Activated CD4-positive, alpha-beta memory T cell treated with anti-CD3 and anti-CD28 coated beads for 36 hours (primary cell): ENCODE measurements at regions of chr1 and their contacts with region 1.

Region 1: GRCh38 chr1:200488375-200489165 is 78.7 kb upstream of the ZNF281 start:
- DNase-seq: peak; percentile 50
- H3K4me3 Mint-ChIP-seq: no peak overlapping the region
- H3K27ac Mint-ChIP-seq: no peak overlapping the region
- H3K4me1 Mint-ChIP-seq: peaks cover 14% of the 10 kb centered on the region
- H3K27me3 Mint-ChIP-seq: peaks cover 18% of the 10 kb centered on the region

Region 2: DNA sequence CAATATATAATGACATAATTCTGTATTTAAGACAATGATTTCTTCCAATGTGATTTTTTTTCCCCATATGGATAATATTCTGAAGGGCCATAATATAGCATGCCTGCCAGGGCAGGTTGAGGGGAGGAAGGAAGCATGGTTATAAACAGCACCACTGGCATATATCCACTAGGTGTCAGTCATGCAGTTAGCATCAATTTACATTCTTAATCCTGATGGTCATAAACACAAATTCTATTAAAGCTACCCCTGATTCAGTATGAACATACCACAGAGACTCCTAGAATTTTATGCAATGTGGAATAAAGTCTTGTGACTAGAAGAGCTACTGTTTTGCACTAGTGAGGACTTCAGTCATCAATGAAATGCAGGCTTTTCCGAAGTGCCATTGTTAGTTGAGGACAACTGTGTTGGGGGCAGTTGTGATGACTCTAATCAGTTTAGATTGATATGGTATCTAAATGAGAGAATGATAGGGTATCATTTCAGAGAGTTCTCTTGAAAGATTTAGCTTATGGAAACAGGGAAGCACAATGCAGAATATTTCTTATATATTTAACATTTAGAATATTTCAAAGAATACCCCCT is 803.8 kb before region 1 on chr1:
- CTCF ChIA-PET with region 1: interaction called, 19 read pairs
- POLR2A ChIA-PET with region 1: no interaction called
- intact Hi-C with region 1: loop called (anchors 1 kb)
- DNase-seq: peak; percentile 13
- H3K4me3 Mint-ChIP-seq: no peak overlapping the region
- H3K27ac Mint-ChIP-seq: no peak overlapping the region
- H3K4me1 Mint-ChIP-seq: no peaks in the 10 kb centered on the region
- H3K27me3 Mint-ChIP-seq: peaks cover 1% of the 10 kb centered on the region

Region 3: GRCh38 chr1:200139661-200140250 is 348.8 kb before region 1 on chr1:
- CTCF ChIA-PET with region 1: interaction called, 16 read pairs
- POLR2A ChIA-PET with region 1: no interaction called
- intact Hi-C with region 1: loop called (anchors 1 kb)
- DNase-seq: peak; percentile 27
- H3K4me3 Mint-ChIP-seq: no peak overlapping the region
- H3K27ac Mint-ChIP-seq: no peak overlapping the region
- H3K4me1 Mint-ChIP-seq: no peaks in the 10 kb centered on the region
- H3K27me3 Mint-ChIP-seq: no peaks in the 10 kb centered on the region

Region 4: DNA sequence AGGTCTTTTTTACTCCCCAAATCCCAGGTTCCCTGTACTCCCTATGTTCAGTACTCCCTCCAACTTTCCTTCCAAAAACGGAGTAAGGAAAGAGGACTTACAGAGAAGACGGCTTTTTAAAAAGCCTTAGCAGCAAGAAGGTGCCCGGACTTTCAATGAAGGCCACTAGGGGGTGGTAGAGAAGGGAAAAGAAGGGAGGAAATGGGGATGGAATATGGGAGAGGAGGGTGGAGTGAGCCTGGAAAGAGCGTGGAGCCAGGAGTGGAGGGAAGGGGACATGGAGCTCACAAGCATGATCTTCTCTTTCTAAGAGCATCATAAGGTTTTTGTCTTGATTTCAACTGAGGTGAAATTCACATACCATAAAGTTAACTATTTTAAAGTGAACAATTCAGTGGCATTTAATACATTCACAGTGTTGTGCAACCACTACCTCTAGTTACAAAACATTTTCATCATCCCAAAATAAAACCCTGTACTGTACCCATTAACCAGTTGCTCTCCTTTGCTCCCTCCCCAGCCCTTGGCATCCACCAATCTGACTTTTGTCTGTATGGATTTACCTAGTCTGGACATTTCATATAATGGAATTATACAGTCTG is 208.7 kb before region 1 on chr1:
- CTCF ChIA-PET with region 1: interaction called, 26 read pairs
- POLR2A ChIA-PET with region 1: no interaction called
- intact Hi-C with region 1: loop called (anchors 1 kb)
- DNase-seq: peak; percentile 40
- H3K4me3 Mint-ChIP-seq: no peak overlapping the region
- H3K27ac Mint-ChIP-seq: no peak overlapping the region
- H3K4me1 Mint-ChIP-seq: no peaks in the 10 kb centered on the region
- H3K27me3 Mint-ChIP-seq: no peaks in the 10 kb centered on the region

Region 5: DNA sequence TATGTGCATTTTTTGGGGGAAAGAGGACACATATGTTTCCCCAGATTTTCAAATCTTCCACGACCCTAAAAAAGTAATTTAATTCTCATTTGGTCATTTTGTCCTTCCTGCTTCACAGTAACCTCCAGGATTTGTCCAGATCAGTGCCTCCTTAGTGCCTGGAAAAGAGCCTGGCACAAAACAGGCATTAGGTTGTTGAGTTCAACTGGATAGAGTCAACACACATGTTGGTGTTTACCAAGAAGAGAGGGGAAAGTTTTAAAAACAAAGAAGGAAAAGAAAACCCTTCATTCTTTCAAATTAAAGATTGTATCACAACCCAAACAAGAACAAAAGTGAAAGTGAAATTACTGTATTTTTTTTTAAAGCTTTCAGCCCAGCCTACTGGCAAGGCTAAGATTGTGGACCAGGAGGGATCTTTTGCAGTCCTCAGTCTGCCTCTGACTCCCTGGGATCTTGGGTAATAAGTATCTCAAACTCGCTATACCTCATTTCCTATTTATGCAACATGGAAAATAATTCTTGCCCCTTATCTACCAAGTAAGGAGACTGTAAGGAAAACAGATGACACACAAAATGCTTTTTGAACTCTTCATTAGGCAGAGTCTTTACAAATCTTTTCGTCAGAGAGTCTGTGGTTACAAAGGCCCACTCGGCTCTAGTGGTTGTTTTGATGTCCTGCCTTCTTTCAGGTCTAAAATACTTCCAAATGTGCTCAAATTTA is 136.6 kb before region 1 on chr1:
- CTCF ChIA-PET with region 1: no interaction called
- POLR2A ChIA-PET with region 1: no interaction called
- intact Hi-C with region 1: loop called (anchors 1 kb)
- DNase-seq: peak; percentile 24
- H3K4me3 Mint-ChIP-seq: peak overlapping the region; percentile 55
- H3K27ac Mint-ChIP-seq: peak overlapping the region; percentile 61
- H3K4me1 Mint-ChIP-seq: peaks cover 34% of the 10 kb centered on the region
- H3K27me3 Mint-ChIP-seq: no peaks in the 10 kb centered on the region

Region 6: GRCh38 chr1:200448034-200448762 is 40.4 kb before region 1 on chr1:
- CTCF ChIA-PET with region 1: interaction called, 4 read pairs
- POLR2A ChIA-PET with region 1: interaction called, 3 read pairs
- intact Hi-C with region 1: loop called (anchors 1 kb)
- DNase-seq: peak; percentile 24
- H3K4me3 Mint-ChIP-seq: peak overlapping the region; percentile 38
- H3K27ac Mint-ChIP-seq: peak overlapping the region; percentile 87
- H3K4me1 Mint-ChIP-seq: peaks cover 41% of the 10 kb centered on the region
- H3K27me3 Mint-ChIP-seq: no peaks in the 10 kb centered on the region

Region 7: GRCh38 chr1:200714569-200715187 is 226.1 kb after region 1 on chr1:
- CTCF ChIA-PET with region 1: no interaction called
- POLR2A ChIA-PET with region 1: no interaction called
- intact Hi-C with region 1: no loop called
- DNase-seq: no peak
- H3K4me3 Mint-ChIP-seq: no peak overlapping the region
- H3K27ac Mint-ChIP-seq: no peak overlapping the region
- H3K4me1 Mint-ChIP-seq: no peaks in the 10 kb centered on the region
- H3K27me3 Mint-ChIP-seq: peaks cover 13% of the 10 kb centered on the region